ENCODE measurements at regions of chr1 and their contacts with region 1.

Region 1: GRCh38 chr1:64823691-64824476 is 79.0 kb downstream of the RAVER2 start:
- DNase-seq: peak; percentile 51 to 77
- ATAC-seq: peak; percentile 80

Region 2: DNA sequence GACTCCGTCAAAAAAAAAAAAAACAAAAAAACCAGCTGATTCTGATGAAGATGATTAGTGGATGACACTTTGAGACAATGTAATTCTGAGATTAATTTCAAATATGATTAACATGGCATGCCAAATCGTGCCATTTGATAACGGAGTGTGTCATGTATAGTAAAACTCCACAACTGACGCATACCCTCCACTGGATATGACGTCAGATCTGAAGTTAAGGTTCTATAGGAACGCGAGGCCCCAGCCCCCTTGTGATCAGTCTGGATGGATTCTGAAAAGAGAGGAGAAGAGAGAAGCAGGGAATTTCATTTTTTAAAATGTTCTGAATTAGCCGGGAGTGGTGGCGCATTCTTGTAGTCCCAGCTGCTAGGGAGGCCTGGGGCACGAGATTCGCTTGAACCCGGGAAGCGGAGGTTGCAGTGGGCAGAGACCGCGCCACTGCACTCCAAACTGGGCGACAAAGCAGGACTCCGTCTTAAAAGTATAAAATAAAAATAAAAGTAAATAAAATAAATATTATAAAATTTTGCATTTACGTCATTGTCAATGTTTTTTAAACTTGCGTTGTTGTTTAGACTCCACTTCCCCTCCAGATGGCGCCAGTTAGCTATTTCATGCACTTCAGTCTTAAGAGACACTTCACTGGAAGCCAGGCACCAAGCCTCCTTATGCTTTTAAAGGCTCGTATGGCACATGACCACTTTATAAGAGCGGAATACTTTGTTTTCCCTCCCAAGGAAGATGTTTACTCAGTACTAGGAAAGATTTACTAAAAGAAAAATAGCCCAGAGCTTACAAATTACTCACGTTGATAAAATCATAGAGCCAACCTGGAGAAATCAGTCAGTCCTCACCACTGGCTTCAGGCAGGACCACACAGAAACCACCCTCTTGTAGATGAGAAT is 555.0 kb before region 1 on chr1:
- intact Hi-C with region 1: loop called in 1 of 2 experiments (anchors 5 kb)
- DNase-seq: peak; percentile 46 to 71
- ATAC-seq: peak; percentile 89

Region 3: DNA sequence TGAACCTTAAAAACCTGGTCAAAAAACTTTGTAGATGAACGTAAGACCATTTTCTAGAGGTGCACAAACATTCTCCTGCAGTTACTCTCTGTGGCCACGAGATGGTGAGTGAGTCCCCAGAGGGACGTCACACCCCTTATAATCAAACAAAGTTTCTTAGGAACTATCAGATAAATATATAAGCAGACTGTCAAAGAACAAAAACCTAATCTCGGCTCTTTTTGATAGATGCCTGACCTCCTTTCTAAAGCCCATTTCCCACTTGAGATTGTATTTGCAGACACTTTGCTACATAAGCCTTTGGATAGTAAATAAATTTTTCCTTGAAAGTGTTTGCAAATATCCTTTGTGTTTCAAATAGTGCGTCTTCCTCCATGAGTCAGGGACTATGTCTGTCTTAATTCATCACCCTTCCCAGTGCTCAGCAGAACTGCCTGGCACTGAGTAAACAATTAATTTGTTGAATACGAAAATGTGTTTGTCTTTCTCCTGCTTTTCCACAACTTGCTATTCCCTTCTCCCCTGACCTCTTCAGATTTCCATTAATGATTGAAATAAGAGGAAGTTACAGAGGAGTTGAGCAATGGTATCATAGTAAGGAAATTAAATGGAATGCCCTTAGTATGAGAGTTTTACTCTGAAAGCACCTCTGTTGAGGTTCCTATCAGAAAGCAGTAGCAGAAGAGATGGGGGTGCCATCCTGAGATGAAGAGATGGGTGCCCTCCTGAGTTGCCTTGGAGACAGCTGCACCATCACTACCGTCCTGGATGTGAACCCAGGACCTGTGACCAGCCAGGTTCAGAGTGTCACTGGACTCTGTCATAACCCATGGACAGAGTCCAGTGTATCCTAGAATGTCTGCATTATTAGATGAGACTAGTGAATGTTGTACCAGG is 136.8 kb before region 1 on chr1:
- intact Hi-C with region 1: loop called in 1 of 2 experiments (anchors 5 kb)
- DNase-seq: peak in 1 of 2 donors; percentile 22
- ATAC-seq: peak; percentile 92

Region 4: DNA sequence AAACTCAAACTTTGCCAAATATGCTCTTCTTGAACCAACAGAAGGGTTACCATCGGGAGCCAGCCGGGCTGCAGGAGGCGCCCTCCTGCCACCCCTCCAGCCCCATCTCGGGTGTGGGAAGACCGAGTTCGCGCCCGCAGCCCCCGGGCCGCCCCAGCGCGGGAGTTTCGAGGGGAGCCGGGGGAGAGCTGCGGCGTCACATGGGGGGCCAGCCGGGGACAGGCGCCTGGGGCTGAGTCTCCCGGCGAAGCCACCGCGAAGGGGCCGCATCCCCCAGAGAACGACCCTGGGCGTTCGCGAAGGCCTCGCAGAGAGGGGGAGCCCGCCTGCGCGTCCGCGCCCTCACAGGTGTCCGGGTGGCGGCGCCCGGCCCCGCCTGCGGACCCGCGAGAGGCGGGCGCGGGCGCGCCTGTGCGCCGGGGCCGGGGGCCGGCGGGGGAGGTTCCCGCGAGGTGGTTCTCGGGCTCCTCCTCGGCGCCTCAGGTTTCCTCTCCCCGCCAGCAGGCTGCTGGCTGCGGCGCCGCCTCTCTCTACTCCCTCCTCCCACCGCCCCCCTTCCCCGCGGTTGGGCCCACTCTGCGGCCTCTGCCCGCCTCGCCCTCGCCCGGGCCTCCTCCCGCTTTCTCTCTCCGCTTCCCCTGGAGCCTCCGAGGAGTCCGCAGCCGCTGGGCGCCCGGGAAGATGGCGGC is 79.2 kb before region 1 on chr1 and contains the start of gene RAVER2:
- intact Hi-C with region 1: loop called in 1 of 2 experiments (anchors 5 kb)
- DNase-seq: peak; percentile 81 to 85
- ATAC-seq: peak; percentile 87
- total RNA-seq, gene RAVER2: 47.3 to 58.0 TPM